Dorsolateral prefrontal cortex (tissue), 120 donors: ENCODE measurements at regions of chr11 and their contacts with region 1.

Region 1: DNA sequence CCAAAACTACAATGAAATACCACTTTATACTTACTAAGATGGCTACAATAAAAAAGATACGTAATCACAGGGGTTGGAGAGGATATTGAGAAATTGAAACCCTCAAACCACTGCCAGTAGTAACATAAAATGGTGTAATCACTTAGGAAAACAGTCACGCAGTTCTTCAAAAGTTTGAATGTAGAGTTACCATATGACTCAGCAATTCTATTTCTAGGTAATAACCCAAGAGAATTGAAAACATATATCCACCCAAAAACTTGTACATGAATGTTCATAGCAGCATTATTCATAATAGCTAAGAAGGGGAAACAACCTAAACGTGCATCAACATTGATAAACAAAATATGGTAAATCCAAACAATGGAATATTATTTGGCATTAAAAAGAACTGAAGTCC is 24.4 kb upstream of the PSMA1 start:
- DNase-seq: no peak
- H3K4me3 ChIP-seq: no peak overlapping the region
- H3K27ac ChIP-seq: no peak overlapping the region
- H3K27me3 ChIP-seq: no peaks in the 10 kb centered on the region
- CTCF ChIP-seq: no peak

Region 2: GRCh38 chr11:14499554-14500180 is 44.9 kb before region 1 on chr11 and contains the start of gene COPB1:
- intact Hi-C with region 1: no loop called
- DNase-seq: peak; percentile 81 to 94 (median 91)
- H3K4me3 ChIP-seq: peak within 1 kb of the TSS; percentile 55 to 89 (median 79)
- H3K27ac ChIP-seq: peak within 1 kb of the TSS; percentile 45 to 95 (median 85)
- H3K27me3 ChIP-seq: no peaks in the 10 kb centered on the region
- CTCF ChIP-seq: peak in 27 of 56 donors; percentile 7 to 35 (median 21)
- total RNA-seq, gene COPB1: 37.4 to 62.0 (median 47.8) TPM

Region 3: DNA sequence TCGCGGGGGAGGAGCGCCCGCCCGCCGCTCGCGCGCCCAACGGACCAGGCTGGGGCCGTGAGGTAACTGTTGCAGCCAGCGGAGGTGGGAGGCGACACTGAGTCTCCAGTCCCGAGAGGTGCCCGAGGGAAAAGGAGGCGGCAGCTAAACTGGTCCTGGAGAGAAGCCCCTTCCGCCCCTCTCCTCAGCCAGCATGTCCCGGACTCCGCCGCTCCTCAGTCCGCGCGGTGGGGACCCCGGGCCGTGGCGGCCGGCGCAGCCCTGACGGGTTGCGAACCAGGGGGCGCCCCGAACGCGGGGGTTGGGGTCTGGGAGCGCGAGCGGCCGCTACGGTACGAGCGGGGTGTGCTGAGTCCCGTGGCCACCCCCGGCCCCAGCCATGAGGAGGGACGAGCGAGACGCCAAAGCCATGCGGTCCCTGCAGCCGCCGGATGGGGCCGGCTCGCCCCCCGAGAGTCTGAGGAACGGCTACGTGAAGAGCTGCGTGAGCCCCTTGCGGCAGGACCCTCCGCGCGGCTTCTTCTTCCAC is 99.2 kb after region 1 on chr11 and contains the start of gene PDE3B:
- intact Hi-C with region 1: loop called (anchors 10 kb)
- DNase-seq: peak in 9 of 10 donors; percentile 39 to 88 (median 71)
- H3K4me3 ChIP-seq: peak within 1 kb of the TSS; percentile 60 to 92 (median 81)
- H3K27ac ChIP-seq: peak within 1 kb of the TSS in 58 of 59 donors; percentile 26 to 93 (median 84)
- H3K27me3 ChIP-seq: peaks cover 0 to 31% (median 0%) of the 10 kb centered on the region in 45 donors
- CTCF ChIP-seq: peak in 6 of 56 donors; percentile 4 to 22 (median 14)
- total RNA-seq, gene PDE3B: 7.7 to 24.9 (median 14.6) TPM

Region 4: GRCh38 chr11:14655435-14655834 is 110.8 kb after region 1 on chr11:
- intact Hi-C with region 1: no loop called
- DNase-seq: no peak
- H3K4me3 ChIP-seq: no peak overlapping the region
- H3K27ac ChIP-seq: no peak overlapping the region
- H3K27me3 ChIP-seq: no peaks in the 10 kb centered on the region
- CTCF ChIP-seq: no peak